ENCODE measurements at regions of chr15 and their contacts with region 1.

Region 1: DNA sequence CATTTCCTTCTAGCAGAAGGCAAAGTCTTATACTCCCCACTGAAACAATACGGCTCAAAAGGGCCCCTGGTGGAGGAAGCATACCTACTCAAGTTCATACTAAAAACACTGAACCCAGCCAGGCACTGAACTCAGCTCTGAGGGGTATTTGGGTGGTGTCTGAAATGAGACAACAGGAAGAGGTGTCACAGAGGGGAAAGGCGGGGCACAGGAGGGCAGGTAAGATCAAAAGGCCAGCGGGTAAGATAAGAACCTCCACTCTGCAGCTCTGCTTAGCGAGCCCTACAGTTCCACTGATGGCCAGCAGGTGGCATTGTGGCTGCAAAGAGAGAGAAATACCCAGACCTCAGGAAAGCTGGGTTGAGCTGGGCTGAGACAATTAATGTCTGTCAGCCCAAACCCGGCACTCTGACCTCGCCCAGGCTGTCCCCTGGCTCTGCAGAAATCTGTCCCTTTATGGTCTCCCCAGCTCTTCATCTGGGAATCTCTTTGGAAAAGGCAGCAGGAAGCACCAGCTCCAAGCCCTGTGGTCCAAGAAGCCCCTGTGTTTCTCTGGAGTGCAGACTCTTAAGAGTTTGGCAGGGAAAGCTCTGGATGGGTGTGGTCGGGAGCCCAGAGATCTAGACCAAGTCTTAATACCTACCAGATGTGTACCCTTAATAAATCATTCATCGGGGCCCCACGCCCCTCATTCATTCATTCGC is 8.4 kb downstream of the MFGE8 start:
- DNase-seq: peak; percentile 85 to 95
- H3K4me3 ChIP-seq: no peak overlapping the region
- H3K4me1 ChIP-seq: peaks cover 2% of the 10 kb centered on the region; the same call in 1 of the 2 replicates
- H3K27me3 ChIP-seq: no peaks in the 10 kb centered on the region

Region 2: GRCh38 chr15:88467073-88467934 is 437.5 kb before region 1 on chr15 and contains the starts of genes MRPL46 and MRPS11:
- in situ Hi-C with region 1: loop called (anchors 5 kb)
- DNase-seq: peak; percentile 98 to 99
- H3K4me3 ChIP-seq: peak within 1 kb of the TSS; percentile 85
- H3K4me1 ChIP-seq: peaks cover 27% of the 10 kb centered on the region
- H3K27me3 ChIP-seq: no peaks in the 10 kb centered on the region

Region 3: GRCh38 chr15:88849376-88850072 is 55.3 kb before region 1 on chr15:
- in situ Hi-C with region 1: no loop called
- DNase-seq: no peak
- H3K4me3 ChIP-seq: no peak overlapping the region
- H3K4me1 ChIP-seq: no peaks in the 10 kb centered on the region
- H3K27me3 ChIP-seq: peaks cover 4% of the 10 kb centered on the region; the same call in 1 of the 2 replicates

Region 4: GRCh38 chr15:89017370-89018066 is 112.7 kb after region 1 on chr15:
- in situ Hi-C with region 1: loop called (anchors 5 kb)
- DNase-seq: peak; percentile 93 to 99
- H3K4me3 ChIP-seq: peak overlapping the region; percentile 7
- H3K4me1 ChIP-seq: peaks cover 5% of the 10 kb centered on the region
- H3K27me3 ChIP-seq: no peaks in the 10 kb centered on the region

Region 5: DNA sequence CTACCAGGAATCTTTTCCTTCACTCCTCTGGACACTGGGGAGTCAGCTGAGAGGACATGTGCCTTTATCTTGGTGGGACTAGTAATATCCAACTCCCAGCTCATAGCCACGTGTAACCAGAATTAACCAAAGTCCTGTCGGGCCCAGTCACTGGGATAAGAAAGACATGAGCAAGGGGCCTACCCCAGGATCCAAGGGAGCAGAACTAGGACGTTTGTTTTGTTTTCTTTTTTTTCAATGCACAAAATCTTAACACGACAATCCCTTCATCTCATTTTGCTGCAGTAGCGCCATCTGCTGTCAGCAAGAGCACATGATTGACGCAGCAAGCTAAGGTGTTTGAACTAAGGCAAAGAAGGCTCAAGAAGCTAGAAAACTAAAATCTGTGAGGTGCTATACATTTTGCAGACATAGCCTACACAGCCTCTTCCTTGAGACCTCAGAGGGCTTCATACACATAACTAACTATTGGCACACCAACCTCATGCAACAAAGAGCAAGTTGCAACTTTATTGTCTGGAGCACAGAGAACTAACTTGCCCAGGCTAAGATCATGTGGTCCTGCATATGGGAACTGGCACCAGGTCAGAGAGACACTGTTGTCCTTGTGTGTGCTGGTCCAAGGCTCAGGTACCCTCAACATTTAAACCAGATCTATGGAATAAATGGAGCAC is 273.0 kb after region 1 on chr15:
- in situ Hi-C with region 1: loop called (anchors 5 kb)
- DNase-seq: peak; percentile 89 to 95
- H3K4me3 ChIP-seq: no peak overlapping the region
- H3K4me1 ChIP-seq: no peaks in the 10 kb centered on the region
- H3K27me3 ChIP-seq: no peaks in the 10 kb centered on the region

Measured in HAP-1 (cell line).